ENCODE measurements at regions of chr3 and their contacts with region 1.

Region 1: GRCh38 chr3:32467333-32468070 is 35.1 kb downstream of the CMTM6 start:
- DNase-seq: peak; percentile 84
- ATAC-seq: peak; percentile 97

Region 2: GRCh38 chr3:32374788-32375595 is 92.5 kb before region 1 on chr3:
- intact Hi-C with region 1: loop called (anchors 2 kb)
- DNase-seq: no peak
- ATAC-seq: peak; percentile 75